Posterior cingulate gyrus (tissue), 11 donors: ENCODE measurements at regions of chr22 and their contacts with region 1.

Region 1: GRCh38 chr22:40044102-40044869 is 49.5 kb downstream of the FAM83F start:
- DNase-seq: peak; percentile 96 to 100 (median 98)

Region 2: GRCh38 chr22:40177738-40178416 is 133.6 kb after region 1 on chr22 and contains the start of gene TNRC6B:
- intact Hi-C with region 1: loop called (anchors 2 kb)
- DNase-seq: peak in 8 of 10 donors; percentile 54 to 93 (median 70)

Region 3: GRCh38 chr22:40346178-40347118 is 302.2 kb after region 1 on chr22 and contains the start of gene ADSL:
- intact Hi-C with region 1: loop called (anchors 5 kb)
- DNase-seq: peak; percentile 78 to 98 (median 87)